Right ventricle myocardium inferior (tissue), 1 donor: ENCODE measurements at regions of chr19 and their contacts with region 1.

Region 1: GRCh38 chr19:29694669-29695627 is 20.1 kb downstream of the C19orf12 start:
- DNase-seq: peak; percentile 91
- ATAC-seq: peak; percentile 97

Region 2: DNA sequence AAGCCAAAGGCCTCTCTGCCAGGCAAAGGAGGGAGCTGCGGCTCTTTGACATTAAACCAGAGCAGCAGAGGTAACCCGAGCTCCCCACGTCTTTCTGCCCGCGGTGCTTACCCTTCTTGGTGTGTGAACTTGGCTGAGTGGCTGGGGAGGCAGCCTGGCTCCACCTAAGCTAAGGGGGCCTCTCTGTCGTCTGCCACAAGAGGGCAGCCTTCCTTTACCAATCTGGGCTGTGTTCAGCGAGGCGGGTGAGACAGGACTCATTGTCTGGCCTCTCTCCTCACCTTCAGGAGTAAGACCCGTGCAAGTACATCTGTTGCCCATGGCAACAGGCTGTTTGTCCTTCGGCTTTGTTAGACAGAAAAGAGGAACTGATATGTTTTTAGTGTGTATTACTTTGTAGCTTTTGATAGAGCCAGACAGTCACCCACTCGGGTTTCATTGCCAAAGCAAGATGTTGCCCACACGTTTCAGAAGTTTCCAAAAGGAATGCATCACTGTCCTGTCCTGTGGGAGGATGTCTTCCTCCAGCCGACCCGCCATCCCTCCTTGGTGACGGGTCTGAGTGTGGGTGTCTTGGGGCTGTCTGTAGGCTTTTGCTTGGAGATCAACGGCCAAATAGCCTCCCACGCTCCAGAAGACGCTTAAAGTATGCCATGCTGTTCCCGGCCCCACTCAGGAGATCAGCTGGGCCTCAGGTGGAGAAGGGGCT is 84.2 kb before region 1 on chr19:
- intact Hi-C with region 1: loop called (anchors 1 kb)
- DNase-seq: peak; percentile 78
- ATAC-seq: peak; percentile 84

Region 3: DNA sequence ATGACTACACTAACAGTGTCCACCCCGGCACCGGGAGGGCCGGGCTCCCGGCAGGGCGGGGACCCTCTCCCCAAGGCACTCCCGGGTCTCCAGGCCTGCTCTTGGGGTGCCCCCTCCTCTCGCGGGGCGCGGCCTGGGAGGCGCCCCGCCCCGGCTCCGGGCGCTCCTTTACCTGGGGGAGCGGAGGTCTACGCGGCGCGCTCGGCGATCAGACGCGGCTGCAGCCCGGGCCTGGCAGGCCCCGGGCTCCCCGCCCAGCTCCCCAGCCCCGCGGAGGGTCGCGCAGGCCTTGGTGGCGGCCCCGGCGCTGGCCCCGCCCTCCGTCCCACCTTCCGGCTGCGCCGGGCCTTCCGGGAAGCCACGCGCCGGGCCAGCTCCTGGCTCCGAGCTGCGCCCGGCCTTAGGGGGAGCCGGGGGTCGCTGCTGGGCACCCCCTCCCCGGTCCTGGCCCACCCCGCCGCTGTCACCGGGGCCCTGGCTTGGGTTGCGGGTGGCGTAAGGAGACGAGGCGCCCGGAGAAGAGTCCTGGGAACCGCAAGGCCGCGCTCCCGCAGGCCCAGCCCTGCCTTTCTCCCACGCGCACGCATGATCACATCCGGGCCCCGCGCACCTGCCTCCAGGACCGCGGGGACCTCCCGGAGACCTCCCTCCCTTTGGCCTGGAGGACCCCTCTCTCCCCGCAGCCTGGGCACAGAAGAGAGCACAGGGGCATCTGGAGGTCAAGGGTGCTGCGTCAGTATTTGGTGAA is 20.2 kb after region 1 on chr19 and contains the start of gene C19orf12:
- intact Hi-C with region 1: loop called (anchors 1 kb)
- DNase-seq: peak; percentile 80
- ATAC-seq: peak; percentile 82
- total RNA-seq, gene C19orf12: 64.2 TPM